Spleen (tissue), 13 donors: ENCODE measurements at regions of chr2 and their contacts with region 1.

Region 1: DNA sequence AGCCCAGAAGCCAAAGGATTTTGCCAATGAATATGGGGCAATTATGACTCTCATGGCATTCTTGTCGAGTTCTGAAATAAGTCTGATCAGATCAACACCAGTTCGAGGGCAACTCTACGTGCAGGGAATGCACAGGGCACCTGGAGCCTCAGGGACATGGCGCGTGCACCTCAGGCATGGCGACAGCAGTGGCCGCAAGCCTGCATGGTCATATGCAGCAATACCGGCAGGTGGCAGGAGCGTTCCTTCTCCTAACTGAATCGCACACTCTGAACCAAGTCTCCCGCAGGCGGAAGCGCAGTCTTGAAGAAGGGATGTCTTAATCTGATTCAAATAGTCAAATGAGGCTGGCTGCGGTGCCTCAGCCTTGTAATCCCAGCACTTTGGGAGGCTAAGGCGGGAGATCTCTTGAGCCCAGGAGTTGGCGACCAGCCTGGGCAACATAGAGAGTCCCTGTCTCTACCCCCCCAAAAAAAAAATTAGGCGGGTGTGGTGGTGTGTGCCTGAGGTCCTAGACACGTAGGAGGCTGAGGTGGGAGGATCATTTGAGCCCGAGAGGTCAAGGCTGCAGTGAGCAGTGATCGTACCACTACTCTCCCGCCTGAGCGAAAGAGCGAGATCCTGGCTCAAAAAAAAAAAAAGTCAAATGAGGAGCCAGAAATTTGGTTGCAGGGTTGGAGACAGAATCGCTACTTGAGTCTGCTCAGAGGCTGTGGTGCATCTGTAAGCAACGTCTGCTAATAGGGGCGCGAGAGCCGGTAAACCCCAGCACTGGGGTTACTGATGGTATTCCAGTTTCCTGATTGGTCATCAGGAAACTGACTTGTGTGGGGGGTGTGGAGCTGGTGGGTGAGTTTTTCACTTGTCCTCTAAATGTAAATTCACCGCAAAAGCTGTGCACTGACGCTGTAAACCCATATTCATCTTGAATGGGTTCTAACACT is 28.8 kb downstream of the FHL2 start:
- DNase-seq: peak; percentile 94
- H3K4me3 ChIP-seq: peak overlapping the region in 1 of 8 donors; percentile 22
- H3K27ac ChIP-seq: peak overlapping the region in 4 of 8 donors; percentile 5 to 54 (median 32)
- H3K4me1 ChIP-seq: peaks cover 0 to 33% (median 18%) of the 10 kb centered on the region in 6 donors
- H3K27me3 ChIP-seq: no peaks in the 10 kb centered on the region
- CTCF ChIP-seq: peak; percentile 87 to 95 (median 91)
- POLR2A ChIP-seq: no peak

Region 2: GRCh38 chr2:105521205-105521604 is 151.2 kb after region 1 on chr2:
- intact Hi-C with region 1: loop called (anchors 5 kb)
- DNase-seq: no peak
- H3K4me3 ChIP-seq: no peak overlapping the region
- H3K27ac ChIP-seq: no peak overlapping the region
- H3K4me1 ChIP-seq: peaks cover 0 to 7% (median 0%) of the 10 kb centered on the region in 6 donors
- H3K27me3 ChIP-seq: peaks cover 0 to 10% (median 0%) of the 10 kb centered on the region in 7 donors
- CTCF ChIP-seq: peak in 9 of 11 experiments; percentile 12 to 73 (median 59)
- POLR2A ChIP-seq: no peak

Region 3: DNA sequence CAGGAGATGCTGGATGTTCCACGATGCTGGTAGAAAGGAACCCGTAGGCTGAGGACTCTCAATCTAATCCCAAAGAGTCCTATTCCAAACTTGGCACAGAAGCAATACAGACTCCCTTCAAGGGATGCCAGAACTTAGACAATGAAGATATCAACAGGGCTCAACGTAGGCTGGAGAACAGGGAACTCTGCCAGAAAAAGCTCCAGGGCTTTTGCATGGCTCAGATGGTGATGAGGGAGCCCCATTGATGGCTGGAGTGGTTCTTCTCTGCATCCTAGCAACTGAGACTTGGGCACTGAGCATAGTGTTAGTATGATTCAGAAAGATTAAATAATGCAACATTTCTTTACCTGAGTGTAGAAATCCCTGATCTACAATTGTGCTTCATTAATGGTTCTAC is 257.5 kb after region 1 on chr2:
- intact Hi-C with region 1: no loop called
- DNase-seq: no peak
- H3K4me3 ChIP-seq: no peak overlapping the region
- H3K27ac ChIP-seq: no peak overlapping the region
- H3K4me1 ChIP-seq: no peaks in the 10 kb centered on the region
- H3K27me3 ChIP-seq: no peaks in the 10 kb centered on the region
- CTCF ChIP-seq: no peak
- POLR2A ChIP-seq: no peak